ENCODE measurements at regions of chr15 and their contacts with region 1.

Region 1: DNA sequence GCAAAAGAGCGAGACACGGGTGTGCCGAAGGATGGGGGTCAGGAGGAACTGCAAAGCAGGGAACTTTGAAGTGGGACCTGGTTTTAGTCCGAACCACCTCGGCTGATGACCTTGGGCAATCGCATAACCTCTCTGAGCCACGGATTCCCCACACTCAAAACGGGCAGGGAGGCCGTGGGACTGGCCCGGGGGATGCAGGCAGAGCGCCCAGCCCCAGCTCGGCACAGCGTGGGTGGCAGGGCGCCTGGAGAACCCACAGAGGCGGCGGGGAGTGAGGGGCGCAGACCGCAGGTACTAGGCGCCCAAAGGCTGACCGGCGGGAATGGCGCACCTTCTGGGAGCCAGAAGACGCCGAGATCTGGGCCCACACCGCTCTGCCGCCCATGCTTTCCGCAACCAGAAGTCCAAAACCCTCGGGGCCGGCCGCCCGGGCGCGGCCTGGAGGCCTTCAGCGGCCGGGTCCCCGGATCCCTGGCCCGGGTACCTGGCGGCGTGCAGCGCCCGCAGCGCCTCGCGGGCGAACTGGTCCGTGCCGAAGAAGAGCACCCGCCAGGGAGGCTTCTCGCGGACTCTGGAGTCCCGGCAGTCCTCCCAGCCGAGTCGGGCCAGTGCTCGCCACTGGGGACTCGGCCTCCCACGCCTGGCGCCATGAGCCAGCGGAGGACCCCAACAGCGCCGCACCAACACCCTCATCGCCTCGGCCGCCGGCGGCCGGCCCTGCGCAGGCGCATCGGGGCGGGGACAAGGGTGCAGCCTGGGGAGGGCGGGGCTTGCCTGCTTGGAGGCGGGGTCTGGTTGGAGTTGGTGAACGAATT is at the start of gene MTFMT:
- DNase-seq: peak; percentile 92 to 97 (median 94)
- ATAC-seq: peak; percentile 90 to 97 (median 96)
- H3K4me3 ChIP-seq: peak within 1 kb of the TSS; percentile 61 to 99 (median 84)
- H3K27ac ChIP-seq: peak within 1 kb of the TSS in 11 of 12 donors; percentile 64 to 90 (median 77)
- H3K4me1 ChIP-seq: peaks cover 0 to 34% (median 10%) of the 10 kb centered on the region in 12 donors
- H3K27me3 ChIP-seq: peaks cover 0 to 5% (median 0%) of the 10 kb centered on the region in 9 donors
- CTCF ChIP-seq: peak in 2 of 12 donors; percentile 15 to 23
- POLR2A ChIP-seq: peak; percentile 60 to 93
- total RNA-seq, gene MTFMT: 14.3 to 41.0 (median 20.5) TPM

Region 2: DNA sequence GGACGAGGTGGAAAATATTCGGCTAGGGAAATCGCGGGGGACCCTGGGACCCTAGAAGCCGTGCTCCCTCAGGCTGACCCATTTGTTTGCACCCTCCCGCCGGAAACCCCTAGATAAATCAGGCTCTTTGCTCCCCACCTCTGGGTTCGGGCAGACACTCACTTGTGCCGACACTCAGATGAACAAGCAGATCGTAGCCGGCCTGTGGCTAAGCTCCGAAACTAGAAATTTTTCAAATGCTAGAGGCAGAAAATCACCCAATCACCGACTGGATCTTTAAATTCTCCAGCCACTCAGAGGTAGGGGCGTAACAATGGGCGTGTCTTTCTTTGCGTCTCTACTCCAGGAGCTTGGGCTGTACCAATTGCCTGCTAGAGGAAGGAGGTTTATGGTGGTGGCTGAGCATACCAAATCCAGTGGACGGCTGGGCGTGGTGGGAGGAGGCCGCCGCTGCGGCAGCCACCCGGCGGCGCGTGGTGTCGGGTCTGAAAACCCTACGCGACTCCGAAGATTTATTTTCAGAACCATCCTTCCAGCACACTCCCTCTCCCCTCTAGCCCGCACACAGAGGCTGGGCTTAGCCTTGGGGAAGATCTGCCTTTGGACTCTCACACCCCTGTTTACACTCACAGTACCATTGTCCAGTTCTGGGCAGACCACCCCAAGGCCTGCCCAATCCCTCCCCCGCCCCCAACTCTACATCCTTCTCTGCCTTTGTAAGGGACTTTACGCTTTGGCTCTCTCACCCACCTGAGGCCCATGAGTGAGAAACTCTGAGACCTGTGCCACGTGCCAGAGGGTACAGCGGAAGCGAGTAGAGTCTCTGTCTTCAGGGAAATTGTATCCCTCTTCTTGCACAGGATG is 203.5 kb before region 1 on chr15 and contains the start of gene PIF1:
- intact Hi-C with region 1: no loop called
- DNase-seq: peak; percentile 83 to 93 (median 92)
- ATAC-seq: peak; percentile 97 to 99 (median 98)
- H3K4me3 ChIP-seq: peak within 1 kb of the TSS; percentile 6 to 65 (median 52)
- H3K27ac ChIP-seq: peak within 1 kb of the TSS in 11 of 12 donors; percentile 56 to 80 (median 71)
- H3K4me1 ChIP-seq: peaks cover 3 to 31% (median 22%) of the 10 kb centered on the region in 12 donors
- H3K27me3 ChIP-seq: peaks cover 0 to 10% (median 0%) of the 10 kb centered on the region in 9 donors
- CTCF ChIP-seq: no peak
- POLR2A ChIP-seq: peak; percentile 72 to 92
- total RNA-seq, gene PIF1: 0.23 to 4.6 (median 0.52) TPM in 7 of 9 donors, not detected in the others

Region 3: DNA sequence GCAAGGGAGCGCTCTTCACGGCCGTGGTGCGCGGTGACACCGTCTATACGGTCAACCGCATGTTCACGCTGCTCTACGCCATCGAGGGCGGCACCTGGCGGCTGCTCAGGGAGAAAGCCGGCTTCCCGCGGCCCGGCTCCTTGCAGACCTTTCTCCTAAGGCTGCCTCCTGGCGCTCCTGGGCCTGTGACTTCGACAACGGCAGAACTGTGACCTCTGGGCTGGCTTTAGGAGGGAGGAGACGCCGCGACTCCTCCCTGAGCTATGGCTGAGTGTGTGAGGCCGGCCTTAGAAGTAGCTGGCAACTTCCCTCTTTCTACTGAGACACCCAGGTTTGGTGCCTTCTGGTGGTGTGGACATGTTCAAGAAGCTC is 48.8 kb after region 1 on chr15:
- intact Hi-C with region 1: loop called in 4 of 10 experiments (anchors 2 to 10 kb)
- DNase-seq: peak; percentile 61 to 85 (median 73)
- ATAC-seq: peak; percentile 5 to 61 (median 58)
- H3K4me3 ChIP-seq: peak overlapping the region in 5 of 12 donors; percentile 2 to 26 (median 16)
- H3K27ac ChIP-seq: peak overlapping the region in 5 of 12 donors; percentile 35 to 86 (median 73)
- H3K4me1 ChIP-seq: peaks cover 7 to 74% (median 32%) of the 10 kb centered on the region in 12 donors
- H3K27me3 ChIP-seq: peaks cover 0 to 20% (median 0%) of the 10 kb centered on the region in 9 donors
- CTCF ChIP-seq: peak; percentile 42 to 71 (median 60)
- POLR2A ChIP-seq: no peak

Region 4: DNA sequence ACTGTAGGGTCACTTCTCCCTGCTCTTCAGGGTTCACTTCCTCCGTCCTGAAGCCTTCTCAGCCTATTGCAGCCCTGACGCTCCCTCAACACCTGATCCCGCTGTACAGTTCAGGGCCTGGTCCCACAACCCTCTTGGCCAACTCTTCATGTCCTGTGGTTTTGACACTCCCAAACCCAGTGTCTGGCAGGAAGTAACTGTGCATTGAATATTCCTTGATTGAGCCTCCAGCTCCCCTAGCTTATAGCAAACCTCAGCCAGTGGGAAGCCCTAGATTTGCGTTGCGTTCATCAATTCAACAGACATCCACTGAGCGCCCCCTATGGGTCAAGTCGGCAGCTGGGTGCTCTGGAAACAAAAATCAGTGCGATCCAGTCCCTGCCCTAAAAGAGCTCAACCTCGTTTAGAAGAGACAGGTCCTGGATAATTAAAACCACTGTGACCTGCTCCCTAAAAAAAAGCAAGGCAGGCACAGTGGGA is 72.3 kb after region 1 on chr15:
- intact Hi-C with region 1: loop called in 2 of 10 experiments (anchors 5 kb)
- DNase-seq: peak; percentile 65 to 77 (median 69)
- ATAC-seq: peak in 3 of 4 donors; percentile 67 to 76 (median 74)
- H3K4me3 ChIP-seq: no peak overlapping the region
- H3K27ac ChIP-seq: no peak overlapping the region
- H3K4me1 ChIP-seq: peaks cover 0 to 5% (median 0%) of the 10 kb centered on the region in 12 donors
- H3K27me3 ChIP-seq: no peaks in the 10 kb centered on the region
- CTCF ChIP-seq: peak; percentile 64 to 81 (median 74)
- POLR2A ChIP-seq: no peak

Region 5: DNA sequence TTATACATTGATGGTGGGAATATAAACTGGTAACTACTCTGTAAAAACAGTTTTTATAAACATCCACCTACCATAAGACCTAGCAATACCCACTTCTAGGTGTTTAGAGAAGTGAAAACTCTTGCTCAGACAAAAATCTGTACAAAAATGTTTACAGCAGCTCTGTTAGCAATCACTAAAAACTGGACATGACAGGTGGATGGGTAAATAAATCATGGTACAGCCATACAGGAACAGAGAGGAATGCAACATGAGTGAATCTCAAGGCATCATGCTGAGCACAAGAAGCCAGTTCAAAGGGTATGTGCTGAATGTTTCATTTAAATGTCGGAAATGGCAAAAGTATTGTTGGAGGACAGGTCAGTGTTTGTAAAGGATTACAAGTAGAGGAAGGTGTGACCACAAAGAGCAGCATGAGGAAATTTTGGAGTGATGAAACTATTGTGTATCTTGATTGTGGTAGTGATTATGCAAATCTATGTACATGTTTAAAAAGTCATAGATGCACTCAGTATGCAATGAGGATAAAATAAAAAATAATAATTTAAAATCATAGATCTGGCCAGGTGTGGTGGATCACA is 263.9 kb after region 1 on chr15:
- intact Hi-C with region 1: loop called in 2 of 10 experiments (anchors 5 to 10 kb)
- DNase-seq: no peak
- ATAC-seq: no peak
- H3K4me3 ChIP-seq: no peak overlapping the region
- H3K27ac ChIP-seq: no peak overlapping the region
- H3K4me1 ChIP-seq: peaks cover 0 to 18% (median 0%) of the 10 kb centered on the region in 12 donors
- H3K27me3 ChIP-seq: no peaks in the 10 kb centered on the region
- CTCF ChIP-seq: no peak
- POLR2A ChIP-seq: no peak

Measured in heart left ventricle (tissue), 16 donors.